Natural killer cell (primary cell): ENCODE measurements at regions of chr4 and their contacts with region 1.

Region 1: GRCh38 chr4:80072744-80073472 is at the start of gene ANTXR2:
- DNase-seq: peak; percentile 50 to 79
- ATAC-seq: peak; percentile 79 to 86 (median 83)
- H3K4me3 ChIP-seq: peak within 1 kb of the TSS; percentile 67
- H3K4me3 Mint-ChIP-seq: peak within 1 kb of the TSS; percentile 95
- H3K27ac ChIP-seq: peak within 1 kb of the TSS; percentile 83
- H3K27ac Mint-ChIP-seq: peak within 1 kb of the TSS; percentile 71 to 91
- H3K4me1 ChIP-seq: peaks cover 15% of the 10 kb centered on the region
- H3K4me1 Mint-ChIP-seq: peaks cover 21 to 32% of the 10 kb centered on the region in 2 donors
- H3K27me3 ChIP-seq: no peaks in the 10 kb centered on the region
- H3K27me3 Mint-ChIP-seq: peaks cover 0 to 2% of the 10 kb centered on the region in 2 donors
- CTCF ChIP-seq: no peak
- total RNA-seq, gene ANTXR2: 7.8 to 28.3 (median 10.0) TPM

Region 2: DNA sequence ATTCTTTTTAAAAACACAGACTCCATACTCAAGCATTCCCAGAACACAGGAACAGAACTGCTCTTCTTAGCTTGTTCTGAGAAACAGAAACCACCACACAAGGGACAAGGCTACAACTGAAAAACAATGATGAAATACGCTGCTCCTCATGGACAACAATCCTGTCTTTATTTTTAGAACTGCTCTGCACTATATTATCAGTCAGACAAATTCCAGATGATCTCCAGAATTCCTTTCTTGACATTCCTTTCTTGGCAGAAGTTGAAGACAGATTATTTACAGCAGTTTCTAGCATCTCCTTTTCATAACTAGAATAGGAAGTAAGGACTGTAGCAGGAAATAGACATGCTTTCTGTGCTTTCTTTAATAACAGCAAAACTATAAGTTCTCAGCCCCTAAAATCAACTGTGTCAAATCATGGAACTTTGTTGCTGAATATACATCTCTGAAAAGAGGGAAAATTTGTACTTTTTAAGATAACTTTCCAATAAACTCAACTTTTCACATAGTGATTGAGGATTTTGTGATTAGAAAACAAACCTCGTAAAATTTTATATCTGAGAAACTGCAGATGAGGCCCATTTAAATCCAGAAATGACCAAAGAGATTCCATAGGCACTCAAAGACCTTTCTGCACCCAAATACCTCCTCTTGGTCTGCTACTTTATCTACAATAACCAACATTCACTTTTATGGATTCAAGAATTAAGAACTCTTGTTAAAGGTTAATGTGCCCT is 35.8 kb before region 1 on chr4:
- intact Hi-C with region 1: no loop called
- DNase-seq: peak in 1 of 2 donors; percentile 18
- ATAC-seq: no peak
- H3K4me3 ChIP-seq: no peak overlapping the region
- H3K4me3 Mint-ChIP-seq: peak overlapping the region; percentile 33
- H3K27ac ChIP-seq: no peak overlapping the region
- H3K27ac Mint-ChIP-seq: peak overlapping the region; percentile 65 to 70
- H3K4me1 ChIP-seq: peaks cover 7% of the 10 kb centered on the region
- H3K4me1 Mint-ChIP-seq: peaks cover 20% of the 10 kb centered on the region in 2 donors
- H3K27me3 ChIP-seq: no peaks in the 10 kb centered on the region
- H3K27me3 Mint-ChIP-seq: no peaks in the 10 kb centered on the region
- CTCF ChIP-seq: no peak

Region 3: GRCh38 chr4:80058740-80059139 is 14.2 kb before region 1 on chr4:
- intact Hi-C with region 1: loop called (anchors 2 kb)
- DNase-seq: peak in 1 of 2 donors; percentile 90
- ATAC-seq: peak; percentile 93 to 97 (median 96)
- H3K4me3 ChIP-seq: peak overlapping the region; percentile 11
- H3K4me3 Mint-ChIP-seq: peak overlapping the region; percentile 74
- H3K27ac ChIP-seq: peak overlapping the region; percentile 80
- H3K27ac Mint-ChIP-seq: peak overlapping the region; percentile 90 to 95
- H3K4me1 ChIP-seq: peaks cover 6% of the 10 kb centered on the region
- H3K4me1 Mint-ChIP-seq: peaks cover 11 to 12% of the 10 kb centered on the region in 2 donors
- H3K27me3 ChIP-seq: no peaks in the 10 kb centered on the region
- H3K27me3 Mint-ChIP-seq: no peaks in the 10 kb centered on the region
- CTCF ChIP-seq: no peak

Region 4: GRCh38 chr4:80112236-80112635 is 39.3 kb after region 1 on chr4:
- intact Hi-C with region 1: loop called (anchors 2 kb)
- DNase-seq: no peak
- ATAC-seq: no peak
- H3K4me3 ChIP-seq: no peak overlapping the region
- H3K4me3 Mint-ChIP-seq: no peak overlapping the region
- H3K27ac ChIP-seq: no peak overlapping the region
- H3K27ac Mint-ChIP-seq: no peak overlapping the region
- H3K4me1 ChIP-seq: no peaks in the 10 kb centered on the region
- H3K4me1 Mint-ChIP-seq: no peaks in the 10 kb centered on the region
- H3K27me3 ChIP-seq: peaks cover 2% of the 10 kb centered on the region
- H3K27me3 Mint-ChIP-seq: peaks cover 0 to 8% of the 10 kb centered on the region in 2 donors
- CTCF ChIP-seq: no peak